Activated naive CD8-positive, alpha-beta T cell treated with anti-CD3 and anti-CD28 coated beads, Interleukin-2, amount 10 ng/mL, durations not matched to agents 7 days and 5 days (primary cell): ENCODE measurements at regions of chr5 and their contacts with region 1.

Region 1: GRCh38 chr5:91383027-91383955 is at the start of gene ARRDC3:
- DNase-seq: peak; percentile 99
- ATAC-seq: peak; percentile 67
- H3K4me3 Mint-ChIP-seq: peak within 1 kb of the TSS; percentile 98
- H3K27ac Mint-ChIP-seq: peak within 1 kb of the TSS; percentile 100
- H3K4me1 Mint-ChIP-seq: peaks cover 17% of the 10 kb centered on the region
- H3K27me3 Mint-ChIP-seq: no peaks in the 10 kb centered on the region
- total RNA-seq, gene ARRDC3: 87.3 to 90.6 TPM

Region 2: GRCh38 chr5:91219803-91220371 is 163.4 kb before region 1 on chr5:
- POLR2A ChIA-PET with region 1: interaction called, 13 read pairs
- DNase-seq: no peak
- ATAC-seq: no peak
- H3K4me3 Mint-ChIP-seq: no peak overlapping the region
- H3K27ac Mint-ChIP-seq: no peak overlapping the region
- H3K4me1 Mint-ChIP-seq: peaks cover 8% of the 10 kb centered on the region
- H3K27me3 Mint-ChIP-seq: peaks cover 3% of the 10 kb centered on the region

Region 3: DNA sequence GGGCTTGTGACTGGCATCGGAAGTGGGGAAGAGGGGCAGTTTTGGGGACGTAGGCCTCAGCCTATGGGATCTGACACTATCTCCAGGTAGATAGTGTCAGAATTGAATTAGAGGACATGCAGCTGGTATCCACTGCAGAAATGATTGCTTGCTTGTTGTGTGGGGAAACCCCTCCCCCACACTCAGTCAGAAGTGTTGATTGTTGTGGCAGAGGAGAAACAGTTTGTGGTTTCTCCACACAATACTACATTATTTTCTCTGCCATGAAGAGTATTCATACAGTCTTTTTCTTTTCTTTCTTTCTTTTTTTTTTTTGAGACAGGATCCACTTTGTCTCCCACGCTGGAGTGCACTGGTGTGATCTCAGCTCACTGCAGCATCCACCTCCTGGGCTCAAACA is 114.1 kb before region 1 on chr5:
- POLR2A ChIA-PET with region 1: interaction called, 14 read pairs
- DNase-seq: no peak
- ATAC-seq: peak; percentile 62
- H3K4me3 Mint-ChIP-seq: peak overlapping the region; percentile 28
- H3K27ac Mint-ChIP-seq: peak overlapping the region; percentile 30
- H3K4me1 Mint-ChIP-seq: peaks cover 22% of the 10 kb centered on the region
- H3K27me3 Mint-ChIP-seq: peaks cover 2% of the 10 kb centered on the region

Region 4: DNA sequence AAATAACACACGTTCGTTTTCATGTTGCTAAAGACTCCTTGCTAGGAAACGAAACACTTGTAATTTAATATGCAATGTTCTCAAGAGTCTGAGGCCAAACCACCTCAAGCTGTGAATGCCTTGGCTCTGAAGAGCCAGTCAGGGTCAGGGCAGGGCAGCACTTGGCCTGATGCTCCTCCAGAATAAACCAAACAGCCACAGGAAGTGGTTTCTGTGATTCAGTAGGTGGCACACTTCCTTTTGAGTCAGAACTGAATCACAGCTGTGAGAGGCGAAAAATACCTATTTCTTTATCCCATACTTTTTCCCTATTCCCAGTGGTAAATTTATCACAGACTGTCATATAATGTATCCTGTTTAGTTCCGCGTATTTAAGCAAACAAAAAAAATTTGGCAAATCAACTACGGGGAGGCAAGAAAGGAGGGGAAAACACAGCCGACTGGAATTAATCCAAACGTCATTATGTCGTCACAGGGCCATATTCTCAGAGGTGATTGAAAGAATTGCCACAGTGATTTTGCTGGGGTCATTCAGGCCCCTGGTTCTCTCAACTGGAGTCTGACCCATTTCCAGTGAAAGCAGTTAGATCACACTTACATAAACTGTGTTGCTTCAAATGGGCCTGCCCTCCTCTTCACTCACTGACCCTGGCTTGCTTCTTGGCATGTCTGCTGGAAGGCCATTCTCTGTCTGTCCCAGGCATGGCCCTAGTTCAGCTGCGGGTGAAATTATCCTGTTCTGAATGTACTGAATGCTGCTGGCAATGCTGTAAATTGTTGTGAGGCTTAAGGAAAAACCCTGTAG is 71.4 kb before region 1 on chr5:
- POLR2A ChIA-PET with region 1: interaction called, 30 read pairs
- DNase-seq: peak; percentile 51
- ATAC-seq: peak; percentile 86
- H3K4me3 Mint-ChIP-seq: peak overlapping the region; percentile 70
- H3K27ac Mint-ChIP-seq: peak overlapping the region; percentile 85
- H3K4me1 Mint-ChIP-seq: peaks cover 39% of the 10 kb centered on the region
- H3K27me3 Mint-ChIP-seq: no peaks in the 10 kb centered on the region